ENCODE measurements at regions of chr9 and their contacts with region 1.

Region 1: GRCh38 chr9:91775011-91775707 is 174.9 kb downstream of the ROR2 start:
- DNase-seq: peak; percentile 70
- H3K4me3 Mint-ChIP-seq: no peak overlapping the region
- H3K27ac Mint-ChIP-seq: no peak overlapping the region
- H3K4me1 Mint-ChIP-seq: peaks cover 8% of the 10 kb centered on the region
- H3K27me3 Mint-ChIP-seq: peaks cover 86% of the 10 kb centered on the region
- CTCF ChIP-seq: peak; percentile 78

Region 2: DNA sequence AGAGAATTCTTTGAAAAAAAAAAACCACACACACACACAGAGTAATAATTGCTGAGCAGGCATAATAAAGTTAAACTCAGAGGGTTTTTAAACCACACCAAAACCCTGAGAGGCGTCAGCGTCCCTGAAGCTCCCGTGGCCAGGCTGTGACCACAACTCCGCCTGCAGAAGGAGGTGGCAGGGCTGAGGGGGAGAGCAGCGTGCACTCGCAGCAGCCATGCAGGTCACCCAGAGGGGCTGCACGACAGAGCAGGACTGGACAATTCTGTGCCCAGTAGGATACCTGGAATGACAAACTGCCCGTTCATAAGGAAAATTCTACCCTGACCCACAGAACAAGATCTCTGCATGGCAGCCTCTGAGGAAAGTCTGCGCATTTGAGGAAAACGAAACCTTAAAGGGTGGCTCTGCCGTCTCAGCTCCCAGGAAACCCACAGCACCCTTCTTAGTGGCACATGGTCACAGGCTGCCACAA is 130.9 kb after region 1 on chr9:
- CTCF ChIA-PET with region 1: no interaction called
- intact Hi-C with region 1: loop called (anchors 10 kb)
- DNase-seq: peak; percentile 6
- H3K4me3 Mint-ChIP-seq: no peak overlapping the region
- H3K27ac Mint-ChIP-seq: no peak overlapping the region
- H3K4me1 Mint-ChIP-seq: no peaks in the 10 kb centered on the region
- H3K27me3 Mint-ChIP-seq: no peaks in the 10 kb centered on the region
- CTCF ChIP-seq: no peak

Region 3: DNA sequence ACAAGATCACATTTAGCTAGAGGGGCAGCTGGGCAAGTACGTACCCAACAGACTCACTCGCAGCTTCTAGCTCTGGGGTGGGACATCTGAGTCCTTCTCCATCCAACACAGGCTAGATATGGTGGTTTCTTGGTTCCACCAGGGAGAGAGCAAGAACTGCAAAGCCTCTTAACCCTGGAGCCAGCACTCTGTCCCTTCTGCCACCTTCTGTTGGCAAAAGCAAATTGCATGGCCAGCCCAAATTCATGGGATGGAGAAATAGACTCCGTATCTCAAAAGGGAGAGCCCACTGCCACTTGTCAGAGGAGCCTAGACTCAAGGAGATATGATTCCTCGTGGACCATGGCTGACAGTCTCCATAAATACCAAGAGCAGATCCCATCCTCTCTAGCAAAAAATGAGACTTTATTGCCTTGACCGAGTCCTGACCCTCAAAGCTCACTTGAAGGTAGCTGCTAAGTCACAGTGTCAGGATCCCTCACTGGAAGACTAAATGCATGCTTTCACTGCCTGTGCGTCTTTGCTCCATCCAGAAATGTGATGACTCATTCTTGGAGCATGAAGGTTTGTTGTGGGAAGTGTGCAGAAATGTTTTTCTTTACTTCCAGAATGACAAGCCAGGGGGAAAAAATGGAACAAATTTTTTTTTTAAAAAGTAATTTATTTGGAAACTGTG is 203.7 kb after region 1 on chr9:
- CTCF ChIA-PET with region 1: no interaction called
- intact Hi-C with region 1: loop called (anchors 5 kb)
- DNase-seq: peak; percentile 11
- H3K4me3 Mint-ChIP-seq: no peak overlapping the region
- H3K27ac Mint-ChIP-seq: no peak overlapping the region
- H3K4me1 Mint-ChIP-seq: no peaks in the 10 kb centered on the region
- H3K27me3 Mint-ChIP-seq: peaks cover 11% of the 10 kb centered on the region
- CTCF ChIP-seq: no peak

Measured in Calu3 (cell line).